ENCODE measurements at regions of chrX and their contacts with region 1.

Region 1: GRCh38 chrX:41734530-41734929 is 10.5 kb downstream of the GPR82 start:
- DNase-seq: no peak
- H3K4me3 Mint-ChIP-seq: peak overlapping the region; percentile 52
- H3K27ac Mint-ChIP-seq: peak overlapping the region; percentile 77
- H3K4me1 Mint-ChIP-seq: peaks cover 31% of the 10 kb centered on the region
- H3K27me3 Mint-ChIP-seq: no peaks in the 10 kb centered on the region

Region 2: GRCh38 chrX:41518841-41519220 is 215.7 kb before region 1 on chrX:
- intact Hi-C with region 1: loop called (anchors 5 kb)
- DNase-seq: no peak
- H3K4me3 Mint-ChIP-seq: no peak overlapping the region
- H3K27ac Mint-ChIP-seq: peak overlapping the region; percentile 67
- H3K4me1 Mint-ChIP-seq: peaks cover 55% of the 10 kb centered on the region
- H3K27me3 Mint-ChIP-seq: no peaks in the 10 kb centered on the region

Region 3: GRCh38 chrX:41695426-41695825 is 39.1 kb before region 1 on chrX:
- intact Hi-C with region 1: loop called (anchors 5 kb)
- DNase-seq: no peak
- H3K4me3 Mint-ChIP-seq: no peak overlapping the region
- H3K27ac Mint-ChIP-seq: no peak overlapping the region
- H3K4me1 Mint-ChIP-seq: peaks cover 38% of the 10 kb centered on the region
- H3K27me3 Mint-ChIP-seq: no peaks in the 10 kb centered on the region

Region 4: DNA sequence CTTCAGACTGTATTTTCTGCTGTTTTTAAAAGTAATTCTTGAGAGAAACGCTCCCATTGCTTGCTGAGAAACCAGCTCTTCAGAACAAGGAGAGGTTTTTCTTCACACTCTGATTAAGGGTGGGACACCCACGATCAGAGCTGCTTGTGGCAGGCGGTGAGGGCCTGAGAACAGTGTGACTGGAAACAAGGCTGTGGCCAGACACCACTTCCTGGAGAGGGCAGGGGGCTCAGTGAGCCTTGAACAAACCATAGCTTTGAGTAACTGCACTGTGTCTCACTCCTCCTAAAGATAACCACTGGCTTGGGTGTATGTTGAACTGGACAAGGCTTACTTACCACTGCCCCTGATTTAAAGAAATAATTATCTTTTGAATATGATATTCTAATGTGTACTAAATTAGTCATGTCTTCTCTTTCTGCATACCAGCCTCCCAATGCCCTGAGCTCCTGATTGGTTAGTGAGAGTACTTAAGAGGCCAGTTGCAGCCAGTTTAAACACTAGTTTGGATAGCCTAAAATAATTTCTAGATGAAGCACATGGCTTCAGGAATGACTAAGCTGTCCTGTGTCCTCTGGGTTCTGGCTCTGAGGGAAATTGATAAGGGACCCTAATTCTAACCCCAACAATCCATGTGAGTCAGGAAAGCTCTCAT is 14.3 kb before region 1 on chrX:
- intact Hi-C with region 1: loop called (anchors 2 kb)
- DNase-seq: peak; percentile 23
- H3K4me3 Mint-ChIP-seq: no peak overlapping the region
- H3K27ac Mint-ChIP-seq: peak overlapping the region; percentile 82
- H3K4me1 Mint-ChIP-seq: peaks cover 61% of the 10 kb centered on the region
- H3K27me3 Mint-ChIP-seq: no peaks in the 10 kb centered on the region

Region 5: DNA sequence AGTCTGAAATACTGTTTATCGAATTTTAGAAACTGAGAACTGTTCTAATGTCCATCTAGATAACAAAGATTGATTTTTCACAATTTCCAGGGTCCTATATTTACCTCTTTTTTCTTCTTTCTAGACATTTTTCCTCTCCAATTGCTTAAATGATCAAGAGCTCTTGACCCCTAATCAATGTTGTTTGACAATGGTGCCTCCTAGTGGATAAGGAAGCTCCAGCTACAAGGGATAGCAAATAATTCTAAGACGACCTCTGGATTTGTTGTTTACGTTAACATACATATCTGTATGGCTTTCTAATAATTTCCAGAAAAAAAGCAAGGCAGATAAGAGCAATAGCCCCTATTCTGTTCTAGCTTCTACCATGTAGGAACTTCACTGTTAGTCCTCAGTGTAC is 25.3 kb after region 1 on chrX:
- intact Hi-C with region 1: loop called (anchors 2 kb)
- DNase-seq: no peak
- H3K4me3 Mint-ChIP-seq: no peak overlapping the region
- H3K27ac Mint-ChIP-seq: no peak overlapping the region
- H3K4me1 Mint-ChIP-seq: peaks cover 10% of the 10 kb centered on the region
- H3K27me3 Mint-ChIP-seq: no peaks in the 10 kb centered on the region

Region 6: DNA sequence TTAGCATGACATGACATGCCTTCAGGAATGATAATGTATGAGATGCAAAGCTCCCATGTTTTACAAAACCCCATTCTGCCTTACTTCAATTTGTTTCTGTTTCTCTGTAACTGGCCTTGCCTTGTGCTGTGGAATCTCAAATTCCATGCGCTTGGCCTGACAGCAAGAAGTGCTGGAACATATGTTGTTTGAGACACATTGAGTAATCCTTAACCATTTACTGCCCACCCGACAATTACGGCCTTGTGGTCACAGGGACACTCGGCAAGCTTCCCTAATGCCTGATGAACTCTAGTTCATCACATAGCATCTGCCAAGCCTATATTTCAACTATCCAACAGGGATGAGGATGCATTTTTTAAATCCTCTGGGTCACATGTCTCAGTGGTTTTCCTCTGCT is 415.2 kb after region 1 on chrX:
- intact Hi-C with region 1: no loop called
- DNase-seq: no peak
- H3K4me3 Mint-ChIP-seq: no peak overlapping the region
- H3K27ac Mint-ChIP-seq: no peak overlapping the region
- H3K4me1 Mint-ChIP-seq: peaks cover 6% of the 10 kb centered on the region
- H3K27me3 Mint-ChIP-seq: no peaks in the 10 kb centered on the region